K562 (cell line): ENCODE measurements at regions of chr6 and their contacts with region 1.

Region 1: GRCh38 chr6:3052481-3053230 is 15.6 kb upstream of the RIPK1 start:
- DNase-seq: peak in 3 of 4 experiments; percentile 41 to 53 (median 45)
- ATAC-seq: peak; percentile 1; the same call in 2 of the 3 replicates
- H3K4me3 ChIP-seq: peak overlapping the region; percentile 66
- H3K27ac ChIP-seq: peak overlapping the region; percentile 80
- H3K4me1 ChIP-seq: peaks cover 33 to 35% of the 10 kb centered on the region in 2 experiments
- H3K27me3 ChIP-seq: no peaks in the 10 kb centered on the region
- CTCF ChIP-seq: no peak
- EP300 ChIP-seq: no peak
- POLR2A ChIP-seq: no peak
- RAD21 ChIP-seq: no peak

Region 2: DNA sequence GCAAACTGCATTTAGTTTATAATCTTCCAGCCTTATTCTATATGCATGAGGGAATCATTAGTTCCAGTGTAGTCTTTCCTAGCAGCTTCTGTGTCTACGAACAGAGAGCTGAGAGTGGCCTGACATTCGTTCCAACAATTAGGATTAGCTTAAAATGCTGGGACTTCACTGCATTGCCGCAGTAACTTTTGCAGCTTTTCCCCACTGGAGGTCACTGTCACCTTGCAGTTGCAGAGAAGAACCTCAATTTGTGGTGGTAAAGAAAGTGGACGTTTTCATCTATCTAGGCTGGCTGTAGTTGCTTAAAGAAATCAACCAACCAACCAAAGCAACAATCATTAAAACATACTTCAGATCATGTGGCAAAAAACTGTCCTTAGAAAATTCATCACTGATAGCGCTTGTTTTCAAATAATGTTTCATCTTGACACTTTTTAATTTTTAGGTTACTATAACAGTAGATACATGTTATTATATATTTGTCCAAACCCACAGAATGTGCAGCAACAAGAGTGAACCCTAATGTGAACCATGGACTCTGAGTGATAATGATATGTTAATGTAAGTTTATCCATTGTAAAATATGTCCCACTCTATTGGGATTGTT is 314.2 kb before region 1 on chr6:
- CTCF ChIA-PET with region 1: no interaction called
- POLR2A ChIA-PET with region 1: no interaction called
- in situ Hi-C with region 1: no loop called
- intact Hi-C with region 1: loop called (anchors 1 kb)
- DNase-seq: peak; percentile 64 to 86 (median 68)
- ATAC-seq: peak; percentile 88
- H3K4me3 ChIP-seq: no peak overlapping the region
- H3K27ac ChIP-seq: no peak overlapping the region
- H3K4me1 ChIP-seq: peaks cover 8 to 31% of the 10 kb centered on the region in 2 experiments; a peak in 4 of 5 replicates
- H3K27me3 ChIP-seq: no peaks in the 10 kb centered on the region
- CTCF ChIP-seq: peak; percentile 91 to 96 (median 91)
- EP300 ChIP-seq: no peak
- POLR2A ChIP-seq: no peak
- RAD21 ChIP-seq: peak; percentile 97 to 98

Region 3: GRCh38 chr6:2791124-2791974 is 261.3 kb before region 1 on chr6:
- CTCF ChIA-PET with region 1: no interaction called
- POLR2A ChIA-PET with region 1: interaction called, 4 read pairs
- in situ Hi-C with region 1: loop called (anchors 10 kb)
- intact Hi-C with region 1: loop called (anchors 2 kb)
- DNase-seq: peak; percentile 74 to 88 (median 81)
- ATAC-seq: peak; percentile 97
- H3K4me3 ChIP-seq: no peak overlapping the region
- H3K27ac ChIP-seq: no peak overlapping the region
- H3K4me1 ChIP-seq: peaks cover 2 to 3% of the 10 kb centered on the region in 2 experiments; a peak in 3 of 5 replicates
- H3K27me3 ChIP-seq: no peaks in the 10 kb centered on the region
- CTCF ChIP-seq: peak; percentile 89 to 98 (median 97)
- EP300 ChIP-seq: no peak
- POLR2A ChIP-seq: no peak
- RAD21 ChIP-seq: peak; percentile 97 to 99

Region 4: DNA sequence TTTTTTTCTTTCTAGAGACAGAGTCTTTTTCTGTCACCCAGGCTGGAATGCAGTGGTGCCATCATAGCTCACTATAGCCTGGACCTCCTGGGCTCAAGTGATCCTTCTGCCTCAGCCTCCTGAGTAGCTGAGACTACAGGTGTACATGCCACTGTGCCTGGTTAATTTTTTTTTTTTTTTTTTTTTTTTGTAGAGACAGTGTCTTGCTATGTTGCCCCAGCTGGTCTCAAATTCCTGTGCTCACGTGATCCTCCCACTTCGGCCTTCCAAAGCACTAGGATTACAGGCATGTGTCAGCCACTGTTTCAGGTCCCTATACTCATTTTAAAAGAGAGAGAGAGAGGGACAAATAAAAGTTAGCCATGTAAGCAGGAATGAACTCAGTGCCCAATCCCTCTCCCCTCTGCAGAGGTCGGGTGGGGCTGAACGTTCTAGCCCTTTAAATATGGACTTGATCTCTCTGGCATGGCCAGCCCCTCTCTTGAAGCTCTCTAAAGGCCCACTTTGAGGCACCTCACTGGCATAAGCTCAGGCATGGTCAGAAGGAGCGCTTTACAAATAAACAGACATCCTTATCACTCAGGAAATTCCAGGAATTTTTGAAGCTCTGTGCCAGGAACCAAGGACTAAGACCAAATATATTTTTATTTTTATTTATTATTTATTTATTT is 202.0 kb before region 1 on chr6:
- CTCF ChIA-PET with region 1: interaction called, 7 read pairs
- POLR2A ChIA-PET with region 1: no interaction called
- in situ Hi-C with region 1: no loop called
- intact Hi-C with region 1: loop called (anchors 1 kb)
- DNase-seq: no peak
- ATAC-seq: no peak
- H3K4me3 ChIP-seq: no peak overlapping the region
- H3K27ac ChIP-seq: peak overlapping the region; percentile 35; the same call in 1 of the 3 replicates
- H3K4me1 ChIP-seq: peaks cover 19 to 53% of the 10 kb centered on the region in 2 experiments
- H3K27me3 ChIP-seq: no peaks in the 10 kb centered on the region
- CTCF ChIP-seq: no peak
- EP300 ChIP-seq: no peak
- POLR2A ChIP-seq: no peak
- RAD21 ChIP-seq: no peak

Region 5: GRCh38 chr6:2999618-3000557 is 52.8 kb before region 1 on chr6 and contains the start of gene NQO2:
- CTCF ChIA-PET with region 1: interaction called, 7 read pairs
- POLR2A ChIA-PET with region 1: interaction called, 12 read pairs
- in situ Hi-C with region 1: loop called (anchors 5 kb)
- intact Hi-C with region 1: loop called (anchors 1 kb)
- DNase-seq: peak; percentile 95 to 100 (median 100)
- ATAC-seq: peak; percentile 87
- H3K4me3 ChIP-seq: peak within 1 kb of the TSS; percentile 86
- H3K27ac ChIP-seq: peak within 1 kb of the TSS; percentile 79
- H3K4me1 ChIP-seq: peaks cover 23 to 27% of the 10 kb centered on the region in 2 experiments; a peak in 4 of 5 replicates
- H3K27me3 ChIP-seq: no peaks in the 10 kb centered on the region
- CTCF ChIP-seq: no peak
- EP300 ChIP-seq: no peak
- POLR2A ChIP-seq: peak; percentile 92
- RAD21 ChIP-seq: peak in 1 of 2 experiments; percentile 29; a peak in 2 of 4 replicates
- polyA plus RNA-seq, gene NQO2: 54.6 to 70.1 TPM

Region 6: DNA sequence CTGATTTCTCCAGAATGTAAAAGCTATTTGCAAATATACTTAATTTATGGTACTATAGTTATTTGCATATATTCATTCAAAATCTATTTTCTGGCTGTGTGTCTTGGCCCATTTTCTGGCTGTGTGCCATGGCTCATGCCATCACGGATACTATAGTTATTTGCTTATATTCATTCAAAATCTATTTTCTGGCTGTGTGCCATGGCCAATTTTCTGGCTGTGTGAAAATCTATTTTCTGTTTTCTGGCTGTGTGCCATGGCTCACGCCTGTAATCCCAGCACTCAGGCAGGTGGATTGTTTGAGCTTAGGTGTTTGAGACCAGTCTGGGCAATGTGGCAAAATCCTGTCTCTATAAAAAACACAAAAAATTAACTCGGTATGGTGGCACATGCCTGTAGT is 13.3 kb before region 1 on chr6:
- CTCF ChIA-PET with region 1: no interaction called
- POLR2A ChIA-PET with region 1: interaction called, 14 read pairs
- in situ Hi-C with region 1: no loop called
- intact Hi-C with region 1: no loop called
- DNase-seq: no peak
- ATAC-seq: no peak
- H3K4me3 ChIP-seq: no peak overlapping the region
- H3K27ac ChIP-seq: no peak overlapping the region
- H3K4me1 ChIP-seq: no peaks in the 10 kb centered on the region; a peak in 1 of 5 replicates
- H3K27me3 ChIP-seq: no peaks in the 10 kb centered on the region
- CTCF ChIP-seq: no peak
- EP300 ChIP-seq: no peak
- POLR2A ChIP-seq: no peak
- RAD21 ChIP-seq: no peak